ENCODE measurements at regions of chr9 and their contacts with region 1.

Region 1: GRCh38 chr9:19999491-20000057 is 210.7 kb upstream of the SLC24A2 start:
- DNase-seq: no peak
- ATAC-seq: peak in 1 of 4 donors; percentile 52
- H3K4me3 ChIP-seq: no peak overlapping the region
- H3K27ac ChIP-seq: no peak overlapping the region
- H3K4me1 ChIP-seq: peaks cover 0 to 11% (median 0%) of the 10 kb centered on the region in 12 donors
- H3K27me3 ChIP-seq: no peaks in the 10 kb centered on the region
- CTCF ChIP-seq: no peak
- POLR2A ChIP-seq: no peak

Region 2: GRCh38 chr9:20209391-20210340 is 210.1 kb after region 1 on chr9:
- intact Hi-C with region 1: loop called in 1 of 10 experiments (anchors 10 kb)
- DNase-seq: no peak
- ATAC-seq: no peak
- H3K4me3 ChIP-seq: no peak overlapping the region
- H3K27ac ChIP-seq: no peak overlapping the region
- H3K4me1 ChIP-seq: no peaks in the 10 kb centered on the region
- H3K27me3 ChIP-seq: no peaks in the 10 kb centered on the region
- CTCF ChIP-seq: no peak
- POLR2A ChIP-seq: no peak

Measured in heart left ventricle (tissue), 16 donors.